ENCODE measurements at regions of chr4 and their contacts with region 1.

Region 1: DNA sequence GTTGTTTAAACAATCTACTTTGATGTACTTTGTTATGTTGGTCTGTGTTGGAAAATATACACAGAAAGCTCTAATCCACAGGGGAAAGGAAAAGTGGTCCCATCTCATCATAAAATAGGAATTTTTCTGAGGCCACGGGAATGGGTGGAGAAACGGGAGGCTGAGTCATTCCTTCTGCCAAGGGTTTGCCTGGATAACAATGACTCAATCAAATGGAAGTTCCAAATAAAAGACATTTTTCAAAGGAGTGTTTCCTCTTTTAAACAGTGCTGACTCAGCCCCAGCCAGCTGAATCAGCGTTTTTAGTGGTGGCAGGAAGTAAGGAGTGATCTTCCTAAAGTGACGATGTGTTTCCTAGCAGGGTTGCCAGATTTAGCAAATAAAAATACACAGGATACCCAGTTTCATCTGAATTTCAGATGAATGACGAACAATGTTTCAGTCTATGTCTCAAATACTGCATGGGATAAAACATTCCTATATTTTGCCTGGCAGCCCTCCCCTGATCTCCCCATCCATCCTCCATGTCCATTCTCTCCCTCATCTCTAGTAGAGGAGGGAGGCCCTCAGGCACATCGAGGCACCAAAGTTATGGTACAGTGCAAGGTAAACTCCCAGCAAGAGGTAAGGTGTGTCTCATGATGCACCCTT is 345.4 kb upstream of the GATB start:
- DNase-seq: peak; percentile 97
- ATAC-seq: peak; percentile 72
- H3K4me3 ChIP-seq: peak overlapping the region; percentile 36; the same call in 1 of the 2 replicates
- H3K27ac ChIP-seq: peak overlapping the region; percentile 100
- H3K4me1 ChIP-seq: peaks cover 50% of the 10 kb centered on the region
- H3K27me3 ChIP-seq: no peaks in the 10 kb centered on the region
- CTCF ChIP-seq: no peak

Region 2: DNA sequence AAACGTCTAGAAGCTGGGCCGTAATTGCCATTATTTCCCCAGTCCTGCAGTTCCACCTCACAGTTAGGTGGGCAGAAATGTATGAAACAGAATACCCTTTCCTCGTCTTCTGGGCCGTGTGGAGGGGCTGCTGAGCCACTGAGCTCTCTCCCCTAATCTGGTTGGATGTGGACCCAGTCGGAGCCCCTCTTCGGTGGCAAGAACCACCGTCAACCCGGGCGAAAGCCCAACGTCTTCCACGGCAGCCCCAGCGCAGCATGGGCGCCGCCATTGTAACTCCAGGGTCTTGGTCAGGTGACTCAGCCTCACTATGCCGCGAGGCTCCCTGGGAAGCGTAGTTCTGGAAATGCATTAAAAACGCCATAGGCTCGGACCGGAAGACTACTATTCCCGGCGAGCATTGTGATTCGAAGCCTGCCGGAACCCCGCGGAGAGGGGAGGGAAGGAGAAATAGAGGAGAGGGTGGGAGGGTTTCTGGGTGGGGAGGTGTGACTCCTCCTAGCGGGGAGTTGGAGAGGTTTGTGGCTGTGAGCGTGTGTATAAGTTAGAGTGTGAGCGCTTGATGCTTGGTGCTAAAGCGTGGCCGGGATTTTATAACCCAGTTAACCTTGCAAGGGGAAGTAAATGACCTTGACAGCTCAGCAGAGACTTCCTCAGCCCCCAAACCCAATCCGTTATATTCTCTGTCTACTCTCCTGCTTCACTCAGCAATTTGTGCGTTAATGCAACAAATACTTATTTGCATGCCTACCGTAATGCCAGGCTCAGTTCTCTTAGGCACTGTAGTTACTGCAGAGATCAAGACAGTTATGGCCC is 345.3 kb before region 1 on chr4 and contains the start of gene GATB:
- CTCF ChIA-PET with region 1: no interaction called
- POLR2A ChIA-PET with region 1: no interaction called
- intact Hi-C with region 1: loop called (anchors 2 kb)
- DNase-seq: peak; percentile 94
- ATAC-seq: peak; percentile 99
- H3K4me3 ChIP-seq: peak within 1 kb of the TSS; percentile 96
- H3K27ac ChIP-seq: peak within 1 kb of the TSS; percentile 34; the same call in 1 of the 2 replicates
- H3K4me1 ChIP-seq: peaks cover 3% of the 10 kb centered on the region; the same call in 1 of the 2 replicates
- H3K27me3 ChIP-seq: no peaks in the 10 kb centered on the region
- CTCF ChIP-seq: peak; percentile 44
- total RNA-seq, gene GATB: 20.4 and 22.7 TPM in 2 replicates

Region 3: DNA sequence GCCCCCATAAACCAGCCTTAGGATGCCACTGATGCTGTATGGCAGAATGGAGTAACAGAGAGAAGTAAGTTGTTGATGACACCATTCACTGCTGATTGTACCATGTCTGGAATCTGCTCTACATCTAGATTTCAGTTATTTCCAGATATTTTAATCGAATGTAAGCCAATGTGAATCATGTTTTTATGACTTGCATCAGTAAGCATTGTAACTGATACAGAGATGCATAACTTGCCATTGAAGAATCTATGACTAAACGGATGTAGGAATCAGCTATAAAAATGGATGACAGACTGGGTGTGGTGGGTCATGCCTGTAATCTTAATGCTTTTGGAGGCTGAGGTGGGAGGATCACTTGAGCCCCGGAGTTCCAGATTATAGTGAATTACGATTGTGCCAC is 184.4 kb before region 1 on chr4:
- CTCF ChIA-PET with region 1: no interaction called
- POLR2A ChIA-PET with region 1: no interaction called
- intact Hi-C with region 1: loop called (anchors 10 kb)
- DNase-seq: peak; percentile 85
- ATAC-seq: peak; percentile 88
- H3K4me3 ChIP-seq: no peak overlapping the region
- H3K27ac ChIP-seq: peak overlapping the region; percentile 96
- H3K4me1 ChIP-seq: peaks cover 25% of the 10 kb centered on the region
- H3K27me3 ChIP-seq: no peaks in the 10 kb centered on the region
- CTCF ChIP-seq: no peak

Region 4: DNA sequence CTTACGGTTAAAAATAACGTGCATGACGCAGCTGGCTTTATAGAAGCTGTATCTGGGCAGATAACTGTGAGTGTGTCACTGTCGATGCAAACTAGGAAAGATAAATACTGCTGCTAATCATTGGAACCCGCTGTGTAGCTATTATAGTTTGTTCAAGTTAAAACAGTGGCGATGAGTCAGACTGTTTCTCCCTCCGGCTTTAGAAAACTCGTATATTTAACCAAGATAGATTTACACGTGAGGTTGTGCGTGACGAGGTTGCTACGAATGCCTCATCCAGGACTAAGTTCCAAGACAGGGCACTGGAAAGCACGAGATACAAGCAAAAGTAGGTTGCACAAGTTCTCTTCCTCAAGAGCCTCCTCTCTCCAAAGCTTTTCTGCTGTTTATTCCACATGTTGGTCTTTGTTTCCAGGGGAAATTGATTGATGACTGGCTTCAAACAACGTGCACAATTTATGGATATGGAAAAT is 158.9 kb after region 1 on chr4:
- CTCF ChIA-PET with region 1: no interaction called
- POLR2A ChIA-PET with region 1: no interaction called
- intact Hi-C with region 1: loop called (anchors 2 kb)
- DNase-seq: peak; percentile 94
- ATAC-seq: peak; percentile 98
- H3K4me3 ChIP-seq: peak overlapping the region; percentile 14; the same call in 1 of the 2 replicates
- H3K27ac ChIP-seq: peak overlapping the region; percentile 92
- H3K4me1 ChIP-seq: peaks cover 19% of the 10 kb centered on the region
- H3K27me3 ChIP-seq: no peaks in the 10 kb centered on the region
- CTCF ChIP-seq: no peak

Region 5: GRCh38 chr4:152331042-152331441 is 224.8 kb after region 1 on chr4:
- CTCF ChIA-PET with region 1: no interaction called
- POLR2A ChIA-PET with region 1: no interaction called
- intact Hi-C with region 1: no loop called
- DNase-seq: no peak
- ATAC-seq: no peak
- H3K4me3 ChIP-seq: no peak overlapping the region
- H3K27ac ChIP-seq: no peak overlapping the region
- H3K4me1 ChIP-seq: peaks cover 27% of the 10 kb centered on the region
- H3K27me3 ChIP-seq: no peaks in the 10 kb centered on the region
- CTCF ChIP-seq: no peak

Region 6: GRCh38 chr4:152352622-152353116 is 246.4 kb after region 1 on chr4:
- CTCF ChIA-PET with region 1: no interaction called
- POLR2A ChIA-PET with region 1: no interaction called
- intact Hi-C with region 1: loop called (anchors 10 kb)
- DNase-seq: peak; percentile 87
- ATAC-seq: peak; percentile 99
- H3K4me3 ChIP-seq: peak overlapping the region; percentile 68
- H3K27ac ChIP-seq: peak overlapping the region; percentile 9; the same call in 1 of the 2 replicates
- H3K4me1 ChIP-seq: 0 out of 2 replicates have a peak, but pooled peaks cover 5% of the 10 kb centered on the region
- H3K27me3 ChIP-seq: no peaks in the 10 kb centered on the region
- CTCF ChIP-seq: no peak

Region 7: GRCh38 chr4:152360045-152360410 is 253.8 kb after region 1 on chr4:
- CTCF ChIA-PET with region 1: no interaction called
- POLR2A ChIA-PET with region 1: interaction called, 14 read pairs
- intact Hi-C with region 1: loop called (anchors 10 kb)
- DNase-seq: peak; percentile 35
- ATAC-seq: peak; percentile 55
- H3K4me3 ChIP-seq: no peak overlapping the region
- H3K27ac ChIP-seq: 0 out of 2 replicates have a peak overlapping the region, but pooled peaks have one; percentile 16
- H3K4me1 ChIP-seq: peaks cover 20% of the 10 kb centered on the region
- H3K27me3 ChIP-seq: no peaks in the 10 kb centered on the region
- CTCF ChIP-seq: no peak

Measured in PC-3 (cell line).